H1 (cell line): ENCODE measurements at regions of chr18 and their contacts with region 1.

Region 1: DNA sequence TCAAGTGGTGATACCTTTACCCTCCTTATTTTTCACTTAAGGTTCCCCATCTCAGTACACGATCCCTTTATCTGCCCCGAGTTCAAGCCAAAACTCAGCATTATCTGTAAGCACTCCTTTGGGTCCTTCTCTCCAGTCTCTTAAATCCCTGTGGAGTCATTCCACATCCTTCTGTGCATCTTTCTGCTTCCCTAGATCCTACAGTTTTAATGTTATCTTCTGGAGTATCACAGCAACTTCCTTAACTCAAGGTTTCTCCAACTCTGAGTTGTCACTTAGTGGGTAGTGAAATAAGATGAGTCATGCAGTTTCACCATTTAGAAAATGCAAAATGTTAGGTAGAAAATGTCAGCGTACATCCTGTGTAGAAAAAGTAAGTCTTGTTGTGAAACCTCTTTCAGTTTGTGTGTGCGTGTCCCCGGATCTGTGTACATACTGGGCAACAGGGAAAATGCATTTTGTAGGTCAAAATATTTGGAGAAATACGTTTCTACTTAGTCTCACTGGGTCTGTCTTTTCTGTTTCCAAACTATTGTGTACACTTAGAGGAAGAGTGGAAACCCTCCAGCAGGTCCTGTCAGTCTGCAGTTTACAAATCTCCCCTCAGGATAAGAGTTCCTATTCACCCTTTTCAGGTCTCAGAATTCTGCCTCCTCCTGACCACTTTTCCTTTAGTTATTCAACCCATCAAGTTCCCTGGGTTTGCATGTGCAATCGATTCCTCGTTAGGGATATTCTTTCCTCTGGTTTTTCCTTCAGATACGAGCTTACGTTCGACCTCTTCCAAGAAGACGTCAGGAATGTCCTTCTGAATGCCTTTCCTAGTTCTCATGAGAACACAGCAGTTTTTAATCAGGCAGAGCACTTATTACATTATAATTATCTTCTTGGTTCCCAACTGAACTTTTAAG is 154.8 kb downstream of the TGIF1 start:
- DNase-seq: no peak
- H3K4me3 ChIP-seq: peak overlapping the region; percentile 47 to 91 (median 80)
- H3K27ac ChIP-seq: peak overlapping the region; percentile 87
- H3K4me1 ChIP-seq: peaks cover 5 to 13% (median 9%) of the 10 kb centered on the region in 4 experiments; a peak in 5 of 7 replicates
- H3K27me3 ChIP-seq: no peaks in the 10 kb centered on the region
- CTCF ChIP-seq: no peak
- EP300 ChIP-seq: no peak
- POLR2A ChIP-seq: peak; percentile 4 to 8
- RAD21 ChIP-seq: no peak

Region 2: GRCh38 chr18:3281456-3282400 is 323.0 kb before region 1 on chr18:
- CTCF ChIA-PET with region 1: interaction called, 3 read pairs
- POLR2A ChIA-PET with region 1: interaction called, 11 read pairs
- DNase-seq: no peak
- H3K4me3 ChIP-seq: no peak overlapping the region
- H3K27ac ChIP-seq: no peak overlapping the region
- H3K4me1 ChIP-seq: peaks cover 0 to 7% (median 2%) of the 10 kb centered on the region in 4 experiments; a peak in 3 of 7 replicates
- H3K27me3 ChIP-seq: no peaks in the 10 kb centered on the region
- CTCF ChIP-seq: peak in 2 of 3 experiments; percentile 34 to 53; a peak in 2 of 4 replicates
- EP300 ChIP-seq: no peak
- POLR2A ChIP-seq: no peak
- RAD21 ChIP-seq: peak; percentile 74 to 85

Region 3: GRCh38 chr18:3447895-3448837 is 156.6 kb before region 1 on chr18:
- CTCF ChIA-PET with region 1: interaction called, 19 read pairs
- POLR2A ChIA-PET with region 1: interaction called, 68 read pairs
- DNase-seq: peak; percentile 89 to 92
- H3K4me3 ChIP-seq: peak overlapping the region; percentile 73 to 99 (median 87)
- H3K27ac ChIP-seq: peak overlapping the region; percentile 99
- H3K4me1 ChIP-seq: peaks cover 6 to 16% (median 11%) of the 10 kb centered on the region in 4 experiments
- H3K27me3 ChIP-seq: no peaks in the 10 kb centered on the region
- CTCF ChIP-seq: no peak
- EP300 ChIP-seq: peak; percentile 14 to 41; a peak in 1 of 3 replicates
- POLR2A ChIP-seq: peak; percentile 44 to 79; a peak in 2 of 3 replicates
- RAD21 ChIP-seq: no peak; a peak in 2 of 4 replicates

Region 4: DNA sequence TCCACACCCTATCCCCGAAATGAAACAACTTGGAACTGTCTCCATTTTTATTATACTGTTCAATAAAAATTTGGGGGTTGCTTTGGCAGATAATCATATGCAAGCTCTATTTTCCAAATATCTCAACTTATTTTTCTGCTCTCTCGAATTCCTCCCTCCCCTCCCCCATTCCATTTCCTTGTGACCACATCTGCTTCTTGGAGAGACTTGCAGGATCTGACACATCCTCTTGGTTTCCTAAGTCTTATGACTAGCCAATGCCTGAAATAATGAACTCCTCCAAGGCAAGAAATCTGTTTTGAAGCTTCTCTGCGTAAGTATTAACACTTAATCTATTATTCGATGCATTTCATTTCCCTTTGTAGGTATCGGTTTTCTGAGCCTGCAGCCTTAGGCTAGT is 138.7 kb before region 1 on chr18:
- CTCF ChIA-PET with region 1: no interaction called
- POLR2A ChIA-PET with region 1: interaction called, 15 read pairs
- DNase-seq: no peak
- H3K4me3 ChIP-seq: no peak overlapping the region
- H3K27ac ChIP-seq: no peak overlapping the region
- H3K4me1 ChIP-seq: peaks cover 7 to 19% (median 9%) of the 10 kb centered on the region in 4 experiments; a peak in 6 of 7 replicates
- H3K27me3 ChIP-seq: no peaks in the 10 kb centered on the region
- CTCF ChIP-seq: no peak
- EP300 ChIP-seq: no peak
- POLR2A ChIP-seq: no peak
- RAD21 ChIP-seq: no peak

Region 5: DNA sequence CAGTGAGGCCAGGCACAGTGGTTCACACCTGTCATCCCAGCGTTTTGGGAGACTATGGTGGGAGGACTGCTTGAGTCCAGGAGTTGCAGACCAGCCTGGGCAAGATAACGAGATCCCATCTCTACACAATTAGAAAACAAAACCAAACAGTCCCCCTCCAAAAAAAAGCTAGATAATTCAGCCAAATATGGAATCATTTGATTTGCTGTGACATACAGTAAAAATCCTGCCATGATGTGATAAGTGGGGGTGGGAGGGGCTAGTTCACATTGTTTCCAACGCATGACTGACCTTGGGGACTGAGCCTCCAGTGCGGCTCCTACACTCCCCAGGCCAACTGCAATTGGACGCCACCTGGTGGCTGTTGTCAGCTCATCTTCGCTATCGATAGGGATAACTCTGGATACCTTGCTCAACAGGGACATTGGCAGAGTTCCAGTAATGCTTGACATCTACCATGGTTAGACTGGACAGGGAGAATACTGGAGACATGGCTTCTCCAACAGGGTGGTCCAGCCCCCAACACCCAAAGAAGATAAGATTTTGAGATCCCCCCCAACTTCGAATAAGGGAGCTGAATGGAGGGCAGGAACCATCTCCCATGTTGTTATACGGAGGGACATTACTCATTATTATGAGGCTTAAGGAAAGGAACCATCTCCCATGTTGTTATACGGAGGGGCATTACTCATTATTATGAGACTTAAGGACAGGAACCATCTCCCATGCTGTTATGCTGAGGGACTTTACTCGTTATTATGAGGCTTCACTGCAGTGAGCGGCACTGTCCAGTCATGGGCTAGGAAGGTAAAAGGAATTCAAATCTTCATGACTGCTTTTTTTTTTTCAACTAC is 18.9 kb before region 1 on chr18:
- CTCF ChIA-PET with region 1: interaction called, 14 read pairs
- POLR2A ChIA-PET with region 1: interaction called, 20 read pairs
- DNase-seq: peak; percentile 63 to 84
- H3K4me3 ChIP-seq: no peak overlapping the region
- H3K27ac ChIP-seq: no peak overlapping the region
- H3K4me1 ChIP-seq: peaks cover 3 to 13% (median 9%) of the 10 kb centered on the region in 4 experiments
- H3K27me3 ChIP-seq: no peaks in the 10 kb centered on the region
- CTCF ChIP-seq: peak; percentile 86 to 96 (median 91)
- EP300 ChIP-seq: no peak
- POLR2A ChIP-seq: no peak
- RAD21 ChIP-seq: peak; percentile 88 to 92

Region 6: GRCh38 chr18:3623769-3624545 is 19.2 kb after region 1 on chr18:
- CTCF ChIA-PET with region 1: interaction called, 4 read pairs
- POLR2A ChIA-PET with region 1: interaction called, 29 read pairs
- DNase-seq: peak in 1 of 2 experiments; percentile 65
- H3K4me3 ChIP-seq: no peak overlapping the region
- H3K27ac ChIP-seq: peak overlapping the region; percentile 48; the same call in 1 of the 2 replicates
- H3K4me1 ChIP-seq: peaks cover 9 to 21% (median 11%) of the 10 kb centered on the region in 4 experiments
- H3K27me3 ChIP-seq: no peaks in the 10 kb centered on the region
- CTCF ChIP-seq: no peak
- EP300 ChIP-seq: no peak
- POLR2A ChIP-seq: no peak
- RAD21 ChIP-seq: no peak

Region 7: GRCh38 chr18:3652380-3653262 is 47.9 kb after region 1 on chr18:
- CTCF ChIA-PET with region 1: no interaction called
- POLR2A ChIA-PET with region 1: interaction called, 37 read pairs
- DNase-seq: peak in 1 of 2 experiments; percentile 51
- H3K4me3 ChIP-seq: no peak overlapping the region
- H3K27ac ChIP-seq: no peak overlapping the region
- H3K4me1 ChIP-seq: peaks cover 0 to 9% (median 4%) of the 10 kb centered on the region in 4 experiments; a peak in 6 of 7 replicates
- H3K27me3 ChIP-seq: no peaks in the 10 kb centered on the region
- CTCF ChIP-seq: no peak
- EP300 ChIP-seq: no peak
- POLR2A ChIP-seq: no peak
- RAD21 ChIP-seq: no peak

Region 8: DNA sequence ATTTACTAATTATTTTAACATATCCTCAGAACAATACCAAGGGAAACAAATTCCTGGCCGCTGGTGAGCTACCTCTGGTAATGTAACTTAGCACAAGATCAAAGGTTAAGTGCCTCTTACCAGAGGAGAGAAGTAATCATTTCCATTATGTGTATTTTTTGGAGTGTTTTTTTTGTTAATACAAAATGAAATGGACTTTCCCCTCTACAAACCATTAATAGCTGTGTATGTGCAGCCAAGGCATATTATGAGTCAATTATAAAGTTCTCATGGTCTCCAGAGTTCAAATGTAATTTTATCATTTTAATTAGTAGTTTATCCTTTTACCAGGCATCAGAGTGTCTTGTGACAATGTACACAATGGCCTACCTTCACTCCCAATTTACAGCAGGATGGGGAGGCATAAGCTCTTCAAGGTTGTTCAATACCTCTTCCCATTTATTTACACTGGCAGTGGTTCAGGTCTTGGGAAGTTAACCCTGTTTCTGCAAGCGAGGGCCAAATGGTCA is 87.4 kb after region 1 on chr18:
- CTCF ChIA-PET with region 1: no interaction called
- POLR2A ChIA-PET with region 1: no interaction called
- DNase-seq: no peak
- H3K4me3 ChIP-seq: no peak overlapping the region
- H3K27ac ChIP-seq: no peak overlapping the region
- H3K4me1 ChIP-seq: peaks cover 0 to 6% (median 0%) of the 10 kb centered on the region in 4 experiments; a peak in 2 of 7 replicates
- H3K27me3 ChIP-seq: no peaks in the 10 kb centered on the region
- CTCF ChIP-seq: no peak
- EP300 ChIP-seq: no peak
- POLR2A ChIP-seq: no peak
- RAD21 ChIP-seq: no peak